KBM-7 (cell line): ENCODE measurements at regions of chr22 and their contacts with region 1.

Region 1: GRCh38 chr22:17339095-17339693 is 30.1 kb upstream of the CECR2 start:
- DNase-seq: no peak

Region 2: GRCh38 chr22:17199003-17199731 is 140.0 kb before region 1 on chr22:
- in situ Hi-C with region 1: loop called (anchors 25 kb)
- DNase-seq: no peak